AG04449 (cell line): ENCODE measurements at regions of chr3 and their contacts with region 1.

Region 1: DNA sequence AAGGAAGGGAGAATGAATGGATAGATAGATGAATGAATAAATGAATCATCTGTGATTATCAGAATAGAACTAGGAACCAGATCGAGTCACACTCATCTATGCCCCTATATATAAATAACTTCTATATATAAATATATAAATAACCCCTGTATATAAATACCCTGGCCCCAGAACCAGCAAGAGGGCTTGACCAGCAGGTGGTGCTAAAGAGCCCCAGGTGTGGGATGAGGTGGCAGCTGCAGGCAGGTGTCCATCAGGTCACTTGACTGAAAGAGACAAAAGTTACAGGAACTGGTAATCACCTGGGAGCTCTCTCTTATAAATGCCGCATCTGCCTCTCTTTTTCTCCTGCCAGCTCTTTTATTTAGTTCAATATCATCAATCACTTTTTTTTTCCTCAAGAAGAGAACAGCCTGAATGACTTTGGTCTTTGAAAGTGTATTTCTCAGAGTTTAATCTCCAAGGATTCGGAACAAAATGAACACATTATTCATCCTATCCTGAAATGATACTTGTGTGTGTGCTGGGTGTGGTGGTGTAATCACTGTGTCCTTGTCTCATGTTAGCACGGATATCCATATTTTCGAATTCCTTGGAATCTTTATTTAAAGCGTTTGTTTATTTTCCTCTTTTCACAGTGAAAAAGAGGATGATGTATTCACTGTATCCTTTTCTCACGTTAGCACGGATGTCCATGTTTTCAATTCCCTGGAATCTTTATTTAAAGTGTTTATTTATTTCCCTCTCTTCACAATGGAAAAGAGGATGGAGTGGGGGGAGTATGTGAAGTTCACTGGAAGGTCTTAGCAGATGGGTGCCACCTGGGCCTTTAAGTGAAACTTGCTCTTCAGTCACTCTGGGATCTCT is 35.4 kb upstream of the ATG7 start:
- DNase-seq: no peak
- H3K4me3 ChIP-seq: no peak overlapping the region
- CTCF ChIP-seq: peak; percentile 52

Region 2: GRCh38 chr3:11226042-11226370 is 10.8 kb before region 1 on chr3:
- CTCF ChIA-PET with region 1: interaction called, 12 read pairs
- POLR2A ChIA-PET with region 1: no interaction called
- DNase-seq: no peak
- H3K4me3 ChIP-seq: no peak overlapping the region
- CTCF ChIP-seq: no peak

Region 3: DNA sequence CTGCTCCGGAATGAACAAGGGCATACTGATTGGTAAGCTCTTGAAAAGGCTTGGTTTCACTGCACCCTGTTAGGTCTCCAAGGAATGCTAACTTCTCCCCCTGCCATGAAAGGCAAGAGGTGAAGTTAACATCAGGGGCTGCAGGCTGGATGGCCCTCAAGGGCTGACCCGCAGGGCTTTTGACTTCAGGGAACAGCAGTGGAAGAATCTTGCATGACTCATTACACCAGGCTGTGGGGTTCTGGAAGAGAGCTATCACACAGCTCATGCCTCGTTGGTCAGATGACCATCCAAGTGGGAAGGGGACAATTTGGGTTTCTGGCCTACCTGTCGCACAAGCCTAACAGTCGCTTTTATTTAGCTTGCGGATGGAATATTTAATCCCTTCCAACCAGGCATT is 11.8 kb after region 1 on chr3:
- CTCF ChIA-PET with region 1: interaction called, 10 read pairs
- POLR2A ChIA-PET with region 1: no interaction called
- DNase-seq: no peak
- H3K4me3 ChIP-seq: no peak overlapping the region
- CTCF ChIP-seq: no peak

Region 4: GRCh38 chr3:11271986-11272904 is 35.4 kb after region 1 on chr3 and contains the start of gene ATG7:
- CTCF ChIA-PET with region 1: interaction called, 14 read pairs
- POLR2A ChIA-PET with region 1: interaction called, 3 read pairs
- DNase-seq: peak; percentile 65
- H3K4me3 ChIP-seq: peak within 1 kb of the TSS; percentile 98
- CTCF ChIP-seq: peak; percentile 18